ENCODE measurements at regions of chr10 and their contacts with region 1.

Region 1: DNA sequence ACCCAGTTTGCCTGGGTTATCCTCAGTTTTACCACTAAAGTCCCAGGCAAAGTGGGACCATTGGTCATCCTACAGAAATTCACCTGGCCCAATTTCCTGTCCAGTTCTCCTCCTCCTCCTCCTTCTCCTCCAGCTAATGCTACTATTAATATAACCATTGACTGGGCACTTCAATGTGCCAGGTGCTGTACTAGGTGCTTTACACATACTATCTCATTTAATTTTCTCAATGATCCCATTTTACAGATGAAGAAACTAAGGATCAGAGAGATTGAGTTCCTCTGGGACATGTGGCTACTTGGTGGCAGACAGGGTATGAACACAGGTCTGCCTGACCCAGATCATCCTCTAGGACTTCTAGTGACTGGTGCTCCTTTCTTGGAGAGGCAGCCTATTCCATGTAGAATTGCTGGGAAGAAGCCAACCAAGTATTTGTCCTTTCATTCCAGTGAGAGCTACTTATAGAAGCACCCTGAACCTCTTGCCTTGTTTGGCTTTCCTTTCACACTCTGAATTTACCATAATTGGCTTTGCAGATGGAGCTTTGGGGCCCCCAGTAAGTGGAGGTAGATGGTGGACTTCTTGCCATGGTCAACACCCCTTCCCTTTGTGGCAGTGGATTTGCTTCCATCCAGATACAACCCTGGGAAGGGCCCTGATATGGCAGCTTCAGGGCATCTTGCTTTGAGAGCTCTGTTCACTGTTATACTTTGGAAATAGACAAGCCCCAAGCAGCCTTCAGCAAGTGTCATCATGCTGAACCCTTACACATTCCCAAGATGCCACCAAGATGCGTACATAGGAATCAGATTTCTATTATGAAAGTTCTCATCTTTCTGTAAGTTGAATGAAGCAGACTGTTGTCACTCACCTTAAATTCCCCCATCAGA is 78.7 kb downstream of the MYOF start:
- DNase-seq: no peak
- H3K4me3 ChIP-seq: no peak overlapping the region
- H3K27ac ChIP-seq: no peak overlapping the region
- H3K4me1 ChIP-seq: no peaks in the 10 kb centered on the region
- H3K27me3 ChIP-seq: no peaks in the 10 kb centered on the region
- CTCF ChIP-seq: no peak
- EP300 ChIP-seq: no peak
- POLR2A ChIP-seq: no peak
- RAD21 ChIP-seq: no peak

Region 2: GRCh38 chr10:93386631-93387369 is 16.6 kb before region 1 on chr10:
- CTCF ChIA-PET with region 1: interaction called, 14 read pairs
- POLR2A ChIA-PET with region 1: no interaction called
- DNase-seq: no peak
- H3K4me3 ChIP-seq: no peak overlapping the region
- H3K27ac ChIP-seq: no peak overlapping the region
- H3K4me1 ChIP-seq: no peaks in the 10 kb centered on the region; a peak in 1 of 7 replicates
- H3K27me3 ChIP-seq: no peaks in the 10 kb centered on the region
- CTCF ChIP-seq: peak in 1 of 3 experiments; percentile 4; a peak in 1 of 4 replicates
- EP300 ChIP-seq: no peak
- POLR2A ChIP-seq: no peak
- RAD21 ChIP-seq: no peak; a peak in 1 of 4 replicates

Region 3: DNA sequence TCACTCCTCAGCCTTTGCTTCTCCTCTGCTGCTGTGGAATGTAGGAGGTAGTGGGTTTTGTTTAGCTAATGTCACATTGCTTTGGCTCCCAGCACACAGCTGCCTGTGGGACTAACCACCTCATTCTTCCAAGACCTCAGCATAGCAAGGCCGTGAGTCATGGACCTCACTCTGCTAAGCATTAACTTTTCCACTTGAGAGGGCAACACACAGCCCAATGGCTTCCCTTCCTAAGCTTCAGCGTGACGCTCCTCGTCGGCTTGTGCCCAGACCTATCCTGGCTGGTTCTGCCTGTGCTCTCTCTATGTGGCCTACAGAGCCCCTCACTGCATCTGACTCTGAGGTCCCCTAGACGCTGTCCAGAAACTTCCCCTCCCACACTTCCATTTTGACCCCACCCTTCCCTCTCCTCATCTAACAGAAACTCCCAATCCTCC is 55.4 kb after region 1 on chr10:
- CTCF ChIA-PET with region 1: no interaction called
- POLR2A ChIA-PET with region 1: no interaction called
- DNase-seq: no peak
- H3K4me3 ChIP-seq: no peak overlapping the region
- H3K27ac ChIP-seq: no peak overlapping the region
- H3K4me1 ChIP-seq: peaks cover 0 to 5% (median 2%) of the 10 kb centered on the region in 4 experiments; a peak in 3 of 7 replicates
- H3K27me3 ChIP-seq: no peaks in the 10 kb centered on the region
- CTCF ChIP-seq: no peak
- EP300 ChIP-seq: no peak
- POLR2A ChIP-seq: no peak
- RAD21 ChIP-seq: no peak